Activated T-helper 1 cell treated with anti-CD3 and anti-CD28 coated beads, Interleukin-12 subunit alpha, Interleukin-12 subunit beta, Interleukin-2, Interleukin-4 antibody, amounts not matched to agents 30 ng/mL and 10 ng/mL and 1 ng/mL, durations not matched to agents 14 hours and 24 hours and 36 hours (primary cell): ENCODE measurements at regions of chr19 and their contacts with region 1.

Region 1: DNA sequence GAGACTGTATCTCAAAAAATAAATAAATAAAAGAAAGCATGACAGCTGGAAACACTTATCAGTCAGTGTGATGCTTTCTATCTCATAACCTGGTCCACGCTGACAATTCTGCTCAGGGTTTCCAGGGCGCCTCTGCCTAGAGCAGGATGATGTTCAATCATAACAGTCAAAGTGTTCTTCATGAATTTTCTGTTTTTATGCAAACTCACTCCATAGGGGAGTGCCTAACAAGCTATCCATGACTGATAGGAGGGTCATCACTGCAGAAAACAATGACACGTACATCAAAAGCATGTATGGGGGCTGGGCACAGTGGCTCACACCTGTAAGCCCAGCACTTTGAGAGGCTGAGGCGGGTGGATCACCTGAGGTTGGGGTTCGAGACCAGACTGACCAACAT is 41.4 kb upstream of the ZNF83 start:
- DNase-seq: no peak
- H3K4me3 Mint-ChIP-seq: no peak overlapping the region
- H3K27ac Mint-ChIP-seq: no peak overlapping the region
- H3K4me1 Mint-ChIP-seq: no peaks in the 10 kb centered on the region
- H3K27me3 Mint-ChIP-seq: no peaks in the 10 kb centered on the region

Region 2: DNA sequence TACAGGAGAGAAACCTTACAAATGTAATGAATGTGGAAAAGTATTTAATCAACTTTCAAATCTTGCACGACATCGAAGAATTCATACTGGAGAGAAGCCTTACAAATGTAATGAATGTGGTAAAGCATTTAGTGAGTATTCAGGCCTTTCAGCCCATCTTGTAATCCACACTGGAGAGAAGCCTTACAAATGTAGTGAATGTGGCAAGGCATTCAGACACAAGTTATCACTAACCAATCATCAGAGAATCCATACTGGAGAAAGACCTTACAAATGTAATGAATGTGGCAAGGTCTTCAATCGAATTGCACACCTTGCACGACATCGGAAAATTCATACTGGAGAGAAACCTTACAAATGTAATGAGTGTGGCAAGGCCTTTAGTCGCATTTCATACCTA is 357.2 kb before region 1 on chr19:
- intact Hi-C with region 1: no loop called
- DNase-seq: no peak
- H3K4me3 Mint-ChIP-seq: no peak overlapping the region
- H3K27ac Mint-ChIP-seq: no peak overlapping the region
- H3K4me1 Mint-ChIP-seq: no peaks in the 10 kb centered on the region
- H3K27me3 Mint-ChIP-seq: no peaks in the 10 kb centered on the region

Region 3: GRCh38 chr19:52734893-52735661 is 55.5 kb after region 1 on chr19 and contains the start of gene ZNF611:
- intact Hi-C with region 1: no loop called
- DNase-seq: peak; percentile 97
- H3K4me3 Mint-ChIP-seq: peak within 1 kb of the TSS; percentile 91
- H3K27ac Mint-ChIP-seq: peak within 1 kb of the TSS; percentile 92
- H3K4me1 Mint-ChIP-seq: peaks cover 27% of the 10 kb centered on the region
- H3K27me3 Mint-ChIP-seq: no peaks in the 10 kb centered on the region
- total RNA-seq, gene ZNF611: 17.0 and 21.0 TPM in 2 replicates

Region 4: DNA sequence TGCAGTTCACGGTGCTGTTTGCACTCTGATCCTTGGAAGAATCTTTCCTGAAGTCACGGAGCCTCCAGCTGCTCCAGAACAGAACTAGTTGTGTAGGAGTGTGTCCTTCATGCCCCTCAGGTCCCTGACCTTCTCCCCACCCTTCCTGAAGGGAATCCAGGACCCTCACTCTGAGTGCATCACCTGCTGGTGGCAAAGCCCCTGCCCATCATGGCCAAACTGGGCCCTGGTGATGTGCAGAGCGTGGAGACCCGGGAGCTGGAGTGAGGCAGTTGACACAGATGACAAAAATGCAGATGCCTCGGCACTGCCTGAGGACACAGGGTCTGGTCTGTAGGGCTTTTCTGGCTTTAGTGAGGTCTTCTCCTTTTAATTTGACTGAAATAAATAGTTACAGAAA is 299.0 kb after region 1 on chr19:
- intact Hi-C with region 1: loop called (anchors 2 kb)
- DNase-seq: no peak
- H3K4me3 Mint-ChIP-seq: no peak overlapping the region
- H3K27ac Mint-ChIP-seq: no peak overlapping the region
- H3K4me1 Mint-ChIP-seq: no peaks in the 10 kb centered on the region
- H3K27me3 Mint-ChIP-seq: no peaks in the 10 kb centered on the region